Activated CD4-positive, alpha-beta memory T cell treated with anti-CD3 and anti-CD28 coated beads for 36 hours (primary cell): ENCODE measurements at regions of chr5 and their contacts with region 1.

Region 1: GRCh38 chr5:73498057-73499008 is at the start of gene BTF3:
- DNase-seq: peak; percentile 95
- H3K4me3 Mint-ChIP-seq: peak within 1 kb of the TSS; percentile 98
- H3K27ac Mint-ChIP-seq: peak within 1 kb of the TSS; percentile 97
- H3K4me1 Mint-ChIP-seq: peaks cover 37% of the 10 kb centered on the region
- H3K27me3 Mint-ChIP-seq: peaks cover 2% of the 10 kb centered on the region
- total RNA-seq, gene BTF3: 936 to 944 TPM

Region 2: GRCh38 chr5:71586941-71587765 is 1911.2 kb before region 1 on chr5 and contains the start of gene MCCC2:
- CTCF ChIA-PET with region 1: no interaction called
- POLR2A ChIA-PET with region 1: no interaction called
- intact Hi-C with region 1: loop called (anchors 5 kb)
- DNase-seq: peak; percentile 98
- H3K4me3 Mint-ChIP-seq: peak within 1 kb of the TSS; percentile 84
- H3K27ac Mint-ChIP-seq: peak within 1 kb of the TSS; percentile 90
- H3K4me1 Mint-ChIP-seq: peaks cover 34% of the 10 kb centered on the region
- H3K27me3 Mint-ChIP-seq: no peaks in the 10 kb centered on the region
- total RNA-seq, gene MCCC2: 52.8 to 54.4 TPM

Region 3: DNA sequence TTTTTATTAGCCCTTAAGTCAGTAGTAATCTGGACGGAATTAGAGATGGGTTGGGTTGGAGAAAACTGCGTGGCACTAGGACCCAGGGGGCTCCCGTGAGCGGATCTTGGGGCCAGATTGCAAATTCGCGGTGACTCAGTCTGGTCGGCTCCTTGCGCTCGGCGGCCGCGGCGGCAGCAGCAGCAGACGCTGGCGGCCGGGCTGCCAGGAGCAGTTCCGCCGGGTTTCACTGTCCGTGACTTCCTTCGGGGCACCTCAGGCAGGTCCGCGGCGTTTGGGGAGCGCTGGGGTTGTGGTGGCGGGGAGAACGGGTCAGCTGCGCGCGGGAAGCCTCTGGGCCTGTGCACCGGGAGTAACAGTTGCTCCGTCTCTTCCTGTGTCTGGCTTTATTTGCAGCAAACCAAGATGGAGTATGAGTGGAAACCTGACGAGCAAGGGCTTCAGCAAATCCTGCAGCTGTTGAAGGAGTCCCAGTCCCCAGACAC is 650.3 kb before region 1 on chr5:
- CTCF ChIA-PET with region 1: no interaction called
- POLR2A ChIA-PET with region 1: no interaction called
- intact Hi-C with region 1: loop called (anchors 1 kb)
- DNase-seq: peak; percentile 91
- H3K4me3 Mint-ChIP-seq: peak overlapping the region; percentile 99
- H3K27ac Mint-ChIP-seq: peak overlapping the region; percentile 98
- H3K4me1 Mint-ChIP-seq: peaks cover 40% of the 10 kb centered on the region
- H3K27me3 Mint-ChIP-seq: no peaks in the 10 kb centered on the region

Region 4: DNA sequence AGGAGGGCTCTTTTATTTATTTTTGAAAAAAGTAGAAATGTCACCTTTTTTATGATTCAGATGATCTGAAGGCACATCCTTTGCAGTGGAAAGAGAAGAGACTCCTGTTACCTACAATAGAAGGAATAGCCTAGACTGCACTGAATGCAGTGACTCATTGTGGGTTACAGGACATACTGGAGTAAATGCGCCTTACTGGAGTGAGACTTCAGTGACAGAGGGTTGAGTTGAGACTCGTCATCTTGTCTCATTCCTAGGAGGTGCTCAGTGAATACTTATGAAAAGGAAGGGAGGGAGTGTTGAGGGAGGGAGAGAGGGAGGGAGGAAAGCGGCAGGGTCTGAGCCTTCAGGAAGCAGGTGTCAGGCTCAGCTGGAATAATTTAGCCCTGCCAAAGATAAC is 41.9 kb after region 1 on chr5:
- CTCF ChIA-PET with region 1: interaction called, 5 read pairs
- POLR2A ChIA-PET with region 1: no interaction called
- intact Hi-C with region 1: loop called (anchors 2 kb)
- DNase-seq: no peak
- H3K4me3 Mint-ChIP-seq: no peak overlapping the region
- H3K27ac Mint-ChIP-seq: no peak overlapping the region
- H3K4me1 Mint-ChIP-seq: no peaks in the 10 kb centered on the region
- H3K27me3 Mint-ChIP-seq: peaks cover 12% of the 10 kb centered on the region

Region 5: GRCh38 chr5:73565139-73565968 is 67.0 kb after region 1 on chr5 and contains the starts of genes ANKRA2 and UTP15:
- CTCF ChIA-PET with region 1: no interaction called
- POLR2A ChIA-PET with region 1: interaction called, 14 read pairs
- intact Hi-C with region 1: loop called (anchors 1 kb)
- DNase-seq: peak; percentile 99
- H3K4me3 Mint-ChIP-seq: peak within 1 kb of the TSS; percentile 92
- H3K27ac Mint-ChIP-seq: peak within 1 kb of the TSS; percentile 92
- H3K4me1 Mint-ChIP-seq: peaks cover 33% of the 10 kb centered on the region
- H3K27me3 Mint-ChIP-seq: no peaks in the 10 kb centered on the region
- total RNA-seq, gene ANKRA2: 19.1 to 21.0 TPM
- total RNA-seq, gene UTP15: 29.7 to 33.1 TPM

Region 6: GRCh38 chr5:73853091-73853490 is 354.8 kb after region 1 on chr5:
- CTCF ChIA-PET with region 1: no interaction called
- POLR2A ChIA-PET with region 1: no interaction called
- intact Hi-C with region 1: no loop called
- DNase-seq: no peak
- H3K4me3 Mint-ChIP-seq: no peak overlapping the region
- H3K27ac Mint-ChIP-seq: no peak overlapping the region
- H3K4me1 Mint-ChIP-seq: no peaks in the 10 kb centered on the region
- H3K27me3 Mint-ChIP-seq: no peaks in the 10 kb centered on the region